ENCODE measurements at regions of chr6 and their contacts with region 1.

Region 1: DNA sequence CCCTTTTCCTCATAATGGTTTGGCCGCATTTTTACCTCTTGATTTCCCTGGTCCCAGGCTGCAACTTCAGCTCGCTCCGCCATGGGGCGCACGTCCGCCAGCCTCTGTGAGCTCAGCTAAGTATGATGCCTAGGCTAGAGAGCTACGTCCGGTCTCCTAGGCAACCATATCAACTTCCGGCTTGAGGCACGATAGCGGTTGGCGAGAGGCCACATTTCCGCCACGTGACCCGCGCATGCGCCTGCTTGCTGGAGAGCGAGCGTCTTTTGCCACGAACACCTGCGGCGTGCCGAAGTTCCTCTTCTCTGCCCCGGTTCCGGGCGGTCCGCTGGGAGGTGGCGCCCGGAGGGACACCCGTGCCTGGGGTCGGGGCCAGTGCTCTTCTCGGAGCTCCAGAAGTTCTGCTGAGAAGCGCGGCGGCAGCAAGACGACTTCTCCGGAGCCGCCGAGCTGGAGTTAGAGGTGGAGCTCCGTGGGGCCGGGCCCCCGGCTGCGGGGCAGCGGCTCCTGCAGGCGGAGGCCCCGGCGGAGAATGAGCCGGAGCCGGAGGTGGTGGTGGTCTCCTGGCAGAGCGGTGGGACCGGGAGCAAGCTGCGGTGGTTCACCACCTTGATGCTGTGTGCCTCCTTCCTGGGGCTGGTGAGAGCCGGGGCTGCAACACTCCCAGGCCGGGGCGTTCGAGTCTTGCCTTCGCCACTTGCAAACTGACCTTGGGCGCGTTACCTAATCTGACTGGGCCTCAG is 172.0 kb downstream of the SLC16A10 start:
- DNase-seq: peak; percentile 98 to 100 (median 99)
- ATAC-seq: peak; percentile 95
- H3K4me3 ChIP-seq: peak overlapping the region; percentile 60
- H3K4me3 Mint-ChIP-seq: peak overlapping the region; percentile 90
- H3K27ac ChIP-seq: peak overlapping the region; percentile 78 to 89
- H3K27ac Mint-ChIP-seq: peak overlapping the region; percentile 87
- H3K4me1 ChIP-seq: peaks cover 28% of the 10 kb centered on the region
- H3K4me1 Mint-ChIP-seq: peaks cover 35% of the 10 kb centered on the region
- H3K27me3 ChIP-seq: no peaks in the 10 kb centered on the region
- H3K27me3 Mint-ChIP-seq: no peaks in the 10 kb centered on the region
- CTCF ChIP-seq: peak; percentile 96

Region 2: GRCh38 chr6:110981202-110981600 is 278.1 kb before region 1 on chr6:
- CTCF ChIA-PET with region 1: interaction called, 3 read pairs
- POLR2A ChIA-PET with region 1: interaction called, 5 read pairs
- intact Hi-C with region 1: loop called (anchors 1 to 5 kb)
- DNase-seq: peak in 1 of 14 experiments; percentile 43
- ATAC-seq: peak; percentile 1
- H3K4me3 ChIP-seq: peak overlapping the region; percentile 99
- H3K4me3 Mint-ChIP-seq: peak overlapping the region; percentile 99
- H3K27ac ChIP-seq: peak overlapping the region; percentile 77 to 97
- H3K27ac Mint-ChIP-seq: peak overlapping the region; percentile 99
- H3K4me1 ChIP-seq: peaks cover 14% of the 10 kb centered on the region
- H3K4me1 Mint-ChIP-seq: peaks cover 49% of the 10 kb centered on the region
- H3K27me3 ChIP-seq: no peaks in the 10 kb centered on the region
- H3K27me3 Mint-ChIP-seq: no peaks in the 10 kb centered on the region
- CTCF ChIP-seq: no peak

Region 3: DNA sequence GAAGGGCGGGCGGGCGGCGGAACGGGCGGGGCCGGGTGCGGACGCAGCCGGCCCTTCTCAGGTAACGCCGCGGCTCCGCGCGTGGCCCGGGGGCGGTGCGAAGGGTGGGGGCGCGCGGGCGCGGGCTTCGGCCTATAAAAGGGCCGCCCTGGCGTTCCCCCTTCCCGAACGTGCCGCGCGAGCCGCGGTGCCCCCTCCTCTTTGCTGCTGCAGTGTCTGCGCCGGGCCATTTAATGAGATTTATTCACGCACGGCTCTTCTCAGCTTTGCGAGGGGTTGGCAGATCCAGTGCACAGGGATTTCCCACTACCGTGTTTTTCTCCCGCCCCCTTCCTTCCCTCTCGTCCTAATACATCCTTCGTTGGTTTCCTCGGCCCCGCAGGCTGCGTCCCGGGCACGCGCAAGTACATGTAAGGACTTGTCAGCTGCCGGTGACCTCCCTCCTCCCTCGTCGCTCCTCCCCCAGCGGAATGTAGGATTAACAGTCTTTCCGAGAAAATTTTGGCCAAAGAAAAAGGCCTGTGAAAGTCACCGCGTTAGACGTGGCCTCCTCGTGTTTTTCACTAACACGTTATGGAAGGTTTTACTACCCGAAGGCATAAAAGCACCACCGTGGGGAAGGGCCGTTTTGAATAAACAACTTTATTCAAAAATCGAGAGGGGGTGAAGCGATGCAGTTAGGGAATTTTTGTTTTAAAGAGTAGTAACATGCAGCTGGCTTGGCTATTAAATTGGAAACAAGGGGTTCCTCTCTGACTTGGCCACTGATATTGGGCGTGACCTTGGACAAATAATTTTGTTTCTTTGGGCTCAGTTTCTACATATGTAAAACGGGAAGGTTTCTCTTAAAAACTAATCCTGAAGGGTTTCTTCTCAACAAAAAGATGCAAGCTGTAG is 224.7 kb after region 1 on chr6:
- CTCF ChIA-PET with region 1: interaction called, 19 read pairs
- POLR2A ChIA-PET with region 1: interaction called, 59 read pairs
- intact Hi-C with region 1: loop called in 1 of 2 experiments (anchors 1 kb)
- DNase-seq: peak in 9 of 14 experiments; percentile 51 to 95 (median 83)
- ATAC-seq: peak; percentile 55
- H3K4me3 ChIP-seq: peak overlapping the region; percentile 69
- H3K4me3 Mint-ChIP-seq: peak overlapping the region; percentile 99
- H3K27ac ChIP-seq: peak overlapping the region; percentile 97 to 98
- H3K27ac Mint-ChIP-seq: peak overlapping the region; percentile 98
- H3K4me1 ChIP-seq: peaks cover 30% of the 10 kb centered on the region
- H3K4me1 Mint-ChIP-seq: peaks cover 60% of the 10 kb centered on the region
- H3K27me3 ChIP-seq: no peaks in the 10 kb centered on the region
- H3K27me3 Mint-ChIP-seq: no peaks in the 10 kb centered on the region
- CTCF ChIP-seq: no peak

Region 4: GRCh38 chr6:111642463-111643158 is 383.4 kb after region 1 on chr6:
- CTCF ChIA-PET with region 1: interaction called, 4 read pairs
- POLR2A ChIA-PET with region 1: no interaction called
- intact Hi-C with region 1: loop called (anchors 1 to 10 kb)
- DNase-seq: peak in 6 of 14 experiments; percentile 7 to 48 (median 24)
- ATAC-seq: no peak
- H3K4me3 ChIP-seq: no peak overlapping the region
- H3K4me3 Mint-ChIP-seq: no peak overlapping the region
- H3K27ac ChIP-seq: no peak overlapping the region
- H3K27ac Mint-ChIP-seq: no peak overlapping the region
- H3K4me1 ChIP-seq: no peaks in the 10 kb centered on the region
- H3K4me1 Mint-ChIP-seq: no peaks in the 10 kb centered on the region
- H3K27me3 ChIP-seq: no peaks in the 10 kb centered on the region
- H3K27me3 Mint-ChIP-seq: no peaks in the 10 kb centered on the region
- CTCF ChIP-seq: no peak

Region 5: GRCh38 chr6:112163295-112164257 is 904.3 kb after region 1 on chr6:
- CTCF ChIA-PET with region 1: interaction called, 4 read pairs
- POLR2A ChIA-PET with region 1: no interaction called
- intact Hi-C with region 1: loop called in 1 of 2 experiments (anchors 5 kb)
- DNase-seq: peak; percentile 56 to 83 (median 68)
- ATAC-seq: peak; percentile 97
- H3K4me3 ChIP-seq: no peak overlapping the region
- H3K4me3 Mint-ChIP-seq: peak overlapping the region; percentile 35
- H3K27ac ChIP-seq: no peak overlapping the region
- H3K27ac Mint-ChIP-seq: no peak overlapping the region
- H3K4me1 ChIP-seq: peaks cover 10% of the 10 kb centered on the region
- H3K4me1 Mint-ChIP-seq: peaks cover 12% of the 10 kb centered on the region
- H3K27me3 ChIP-seq: peaks cover 0 to 11% of the 10 kb centered on the region in 2 experiments
- H3K27me3 Mint-ChIP-seq: peaks cover 32% of the 10 kb centered on the region
- CTCF ChIP-seq: peak; percentile 87